ENCODE measurements at regions of chr9 and their contacts with region 1.

Region 1: GRCh38 chr9:76562511-76562911 is 103.5 kb downstream of the GCNT1 start:
- H3K4me3 Mint-ChIP-seq: peak overlapping the region; percentile 45
- H3K27ac Mint-ChIP-seq: peak overlapping the region; percentile 79
- H3K4me1 Mint-ChIP-seq: peaks cover 69% of the 10 kb centered on the region
- H3K27me3 Mint-ChIP-seq: no peaks in the 10 kb centered on the region

Region 2: GRCh38 chr9:76458903-76459690 is 103.4 kb before region 1 on chr9 and contains the start of gene GCNT1:
- intact Hi-C with region 1: loop called (anchors 10 kb)
- H3K4me3 Mint-ChIP-seq: peak within 1 kb of the TSS; percentile 98
- H3K27ac Mint-ChIP-seq: peak within 1 kb of the TSS; percentile 96
- H3K4me1 Mint-ChIP-seq: peaks cover 31% of the 10 kb centered on the region
- H3K27me3 Mint-ChIP-seq: no peaks in the 10 kb centered on the region

Region 3: GRCh38 chr9:76624391-76625048 is 62.0 kb after region 1 on chr9:
- intact Hi-C with region 1: loop called (anchors 5 kb)
- H3K4me3 Mint-ChIP-seq: no peak overlapping the region
- H3K27ac Mint-ChIP-seq: peak overlapping the region; percentile 66
- H3K4me1 Mint-ChIP-seq: peaks cover 48% of the 10 kb centered on the region
- H3K27me3 Mint-ChIP-seq: no peaks in the 10 kb centered on the region

Region 4: DNA sequence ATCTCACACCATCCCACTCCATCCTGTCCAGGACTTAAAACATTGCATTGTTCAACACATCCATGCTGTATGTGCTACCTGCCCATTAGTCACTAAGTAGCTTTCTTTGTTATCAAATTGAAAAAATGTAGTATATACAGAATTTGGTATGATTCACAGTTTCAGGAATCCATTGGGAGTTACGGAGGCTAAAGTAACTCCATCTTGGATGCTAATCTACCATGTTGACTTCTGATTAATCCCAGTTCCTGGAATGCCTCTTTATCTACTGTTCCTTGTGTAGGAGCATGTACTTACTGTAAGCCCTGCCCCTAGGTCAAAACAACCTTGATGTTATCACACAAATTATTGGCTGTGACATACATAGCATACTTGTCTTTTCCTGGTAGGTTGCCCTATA is 418.1 kb after region 1 on chr9:
- intact Hi-C with region 1: no loop called
- H3K4me3 Mint-ChIP-seq: no peak overlapping the region
- H3K27ac Mint-ChIP-seq: no peak overlapping the region
- H3K4me1 Mint-ChIP-seq: no peaks in the 10 kb centered on the region
- H3K27me3 Mint-ChIP-seq: peaks cover 11% of the 10 kb centered on the region